Activated T-helper 2 cell treated with anti-CD3 and anti-CD28 coated beads, Interferon-gamma antibody, Interleukin-2, Interleukin-4, amounts not matched to agents 10 μg/mL and 5 μg/mL and 100 μg/mL, durations not matched to agents 14 hours and 24 hours and 36 hours (primary cell): ENCODE measurements at regions of chr1 and their contacts with region 1.

Region 1: DNA sequence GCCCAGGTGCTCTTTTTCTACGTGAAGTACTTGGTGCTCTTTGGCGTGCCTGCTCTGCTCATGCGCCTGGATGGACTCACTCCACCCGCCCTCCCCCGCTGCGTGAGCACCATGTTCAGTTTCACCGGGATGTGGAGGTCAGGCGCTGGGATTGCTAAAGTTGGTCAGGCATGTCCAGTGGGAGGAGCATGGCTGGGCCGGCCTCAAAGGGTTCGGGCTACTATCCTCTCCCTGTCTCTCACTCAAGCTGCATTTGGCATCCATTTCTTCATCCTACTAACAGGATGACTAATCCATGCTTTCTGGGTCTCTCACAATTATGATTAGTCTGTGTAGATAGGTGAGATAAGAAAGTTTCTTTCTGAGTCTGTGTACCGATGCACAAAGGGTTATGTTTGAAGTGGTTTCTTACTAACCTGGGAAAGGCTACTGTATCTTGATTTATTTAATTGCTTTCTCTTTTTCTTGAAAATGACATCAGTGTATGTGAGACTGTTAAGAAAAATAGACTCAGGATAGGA is 135.9 kb downstream of the HHAT start:
- DNase-seq: peak; percentile 9
- H3K4me3 Mint-ChIP-seq: no peak overlapping the region
- H3K27ac Mint-ChIP-seq: no peak overlapping the region
- H3K4me1 Mint-ChIP-seq: peaks cover 17% of the 10 kb centered on the region
- H3K27me3 Mint-ChIP-seq: peaks cover 56% of the 10 kb centered on the region

Region 2: GRCh38 chr1:210696709-210697108 is 232.1 kb after region 1 on chr1:
- intact Hi-C with region 1: loop called (anchors 5 kb)
- DNase-seq: no peak
- H3K4me3 Mint-ChIP-seq: no peak overlapping the region
- H3K27ac Mint-ChIP-seq: no peak overlapping the region
- H3K4me1 Mint-ChIP-seq: peaks cover 21% of the 10 kb centered on the region
- H3K27me3 Mint-ChIP-seq: peaks cover 34% of the 10 kb centered on the region